ENCODE measurements at regions of chr6 and their contacts with region 1.

Region 1: DNA sequence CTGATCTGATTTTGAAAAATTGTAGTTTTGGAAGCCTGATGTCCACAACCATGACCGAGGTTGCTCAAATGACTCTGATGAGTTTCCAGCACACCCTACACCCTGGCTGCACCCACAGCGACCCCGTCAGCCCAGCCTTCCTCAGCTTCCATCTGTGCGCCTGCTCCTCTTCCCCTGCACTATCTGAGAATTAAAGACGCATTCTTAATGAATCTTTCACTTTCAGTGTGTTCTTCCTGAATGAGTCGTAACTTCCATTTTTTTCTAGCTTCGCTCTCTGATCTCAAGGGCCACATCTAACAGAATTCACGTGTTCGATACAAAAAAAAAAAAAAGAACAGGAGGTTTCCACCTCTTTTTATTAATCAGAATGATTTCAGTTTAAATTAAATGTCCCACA is 21.3 kb upstream of the RREB1 start:
- DNase-seq: peak; percentile 44
- ATAC-seq: peak; percentile 62
- H3K4me3 Mint-ChIP-seq: peak overlapping the region; percentile 75
- H3K27ac Mint-ChIP-seq: peak overlapping the region; percentile 70
- H3K4me1 Mint-ChIP-seq: peaks cover 22% of the 10 kb centered on the region
- H3K27me3 Mint-ChIP-seq: peaks cover 19% of the 10 kb centered on the region

Region 2: DNA sequence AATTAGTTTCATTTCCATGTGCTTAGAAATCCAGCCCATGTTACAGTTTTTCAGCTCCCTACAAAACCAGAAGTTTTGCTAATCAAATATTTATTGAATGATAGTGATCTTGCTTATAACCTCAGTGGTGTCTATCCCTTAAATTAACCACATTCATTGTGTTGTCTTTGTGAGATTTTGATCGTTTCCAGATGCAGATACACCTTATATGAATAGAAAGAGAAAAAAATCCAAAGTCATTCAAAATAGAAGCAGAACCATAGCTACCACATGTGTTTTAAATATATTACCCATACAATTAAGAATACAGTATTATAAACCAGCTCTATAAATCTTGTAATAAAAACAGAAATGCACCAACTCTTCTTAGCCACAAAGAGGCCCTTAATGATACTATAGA is 39.4 kb before region 1 on chr6:
- POLR2A ChIA-PET with region 1: no interaction called
- DNase-seq: no peak
- ATAC-seq: no peak
- H3K4me3 Mint-ChIP-seq: no peak overlapping the region
- H3K27ac Mint-ChIP-seq: no peak overlapping the region
- H3K4me1 Mint-ChIP-seq: peaks cover 13% of the 10 kb centered on the region
- H3K27me3 Mint-ChIP-seq: peaks cover 26% of the 10 kb centered on the region

Region 3: DNA sequence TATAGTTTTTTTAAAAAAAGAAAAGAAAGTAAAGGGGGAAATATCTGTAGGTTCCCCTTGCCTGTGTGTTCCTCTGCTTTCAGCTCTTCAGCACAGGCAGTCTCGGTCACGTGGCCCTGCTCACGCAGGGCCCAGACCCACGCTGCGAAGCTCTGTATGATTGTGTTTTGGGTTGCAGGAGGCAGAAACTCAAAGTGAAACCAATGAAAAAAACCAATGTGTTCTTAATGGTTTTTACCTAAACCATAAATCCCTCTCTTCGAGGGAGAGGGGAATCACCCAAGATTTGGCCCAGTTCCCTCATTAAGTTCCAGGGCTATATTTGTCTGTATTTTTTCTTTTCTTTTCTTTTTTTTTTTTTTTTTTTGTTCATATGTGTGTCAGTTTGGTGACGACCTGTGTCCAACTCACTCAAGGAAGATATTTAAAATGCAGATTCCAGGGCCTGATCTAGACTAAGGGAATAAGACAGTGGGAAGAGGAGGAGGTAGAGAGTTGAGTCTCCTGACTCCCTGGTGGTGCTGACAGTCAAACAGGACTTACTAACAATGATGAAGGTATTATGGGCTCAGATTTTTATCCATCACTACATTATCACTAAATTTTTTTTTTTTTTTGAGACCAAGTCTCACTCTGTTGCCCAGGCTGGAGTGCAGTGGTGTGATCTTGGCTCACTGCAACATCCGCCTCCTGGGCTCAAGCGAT is 12.5 kb before region 1 on chr6:
- POLR2A ChIA-PET with region 1: interaction called, 12 read pairs
- DNase-seq: peak; percentile 49
- ATAC-seq: peak; percentile 99
- H3K4me3 Mint-ChIP-seq: peak overlapping the region; percentile 39
- H3K27ac Mint-ChIP-seq: no peak overlapping the region
- H3K4me1 Mint-ChIP-seq: peaks cover 20% of the 10 kb centered on the region
- H3K27me3 Mint-ChIP-seq: peaks cover 55% of the 10 kb centered on the region

Region 4: GRCh38 chr6:7107578-7108195 is 21.2 kb after region 1 on chr6 and contains the start of gene RREB1:
- POLR2A ChIA-PET with region 1: interaction called, 45 read pairs
- DNase-seq: no peak
- ATAC-seq: peak; percentile 51
- H3K4me3 Mint-ChIP-seq: peak within 1 kb of the TSS; percentile 93
- H3K27ac Mint-ChIP-seq: peak within 1 kb of the TSS; percentile 97
- H3K4me1 Mint-ChIP-seq: peaks cover 36% of the 10 kb centered on the region
- H3K27me3 Mint-ChIP-seq: no peaks in the 10 kb centered on the region
- total RNA-seq, gene RREB1: 37.0 to 39.1 TPM

Measured in activated naive CD8-positive, alpha-beta T cell treated with anti-CD3 and anti-CD28 coated beads, Interleukin-2, amount 10 ng/mL, durations not matched to agents 7 days and 5 days (primary cell).